ENCODE measurements at regions of chr10 and their contacts with region 1.

Region 1: DNA sequence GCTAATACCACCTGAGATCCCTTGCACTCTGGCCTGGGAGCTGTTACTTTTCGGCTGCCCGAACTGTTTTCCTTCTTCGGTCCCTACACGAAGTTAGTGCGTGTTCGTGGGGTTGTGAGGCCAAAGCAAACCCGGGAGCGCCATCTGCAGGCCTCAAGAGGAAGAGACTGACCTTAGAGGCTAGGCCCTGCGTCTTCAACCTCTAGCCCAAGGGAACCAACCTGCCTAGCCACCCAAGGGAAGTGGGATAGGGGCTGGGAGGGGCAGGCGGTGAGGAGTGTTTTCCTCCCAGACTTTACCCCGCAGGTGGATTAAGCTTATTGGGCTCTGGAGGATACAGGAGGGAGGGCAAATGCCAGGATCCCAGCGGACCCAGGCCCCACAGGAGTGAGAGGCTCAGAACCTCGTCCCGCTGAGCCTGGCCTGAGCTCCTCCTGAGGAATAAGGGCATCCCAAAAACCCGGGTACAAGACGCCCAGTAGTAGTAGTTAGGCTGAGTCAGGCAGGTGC is 1.7 kb upstream of the PAX2 start:
- DNase-seq: peak; percentile 54
- H3K27ac ChIP-seq: no peak overlapping the region
- CTCF ChIP-seq: peak; percentile 59

Region 2: GRCh38 chr10:100562008-100562711 is 181.5 kb before region 1 on chr10:
- CTCF ChIA-PET with region 1: interaction called, 77 read pairs
- POLR2A ChIA-PET with region 1: no interaction called
- DNase-seq: peak; percentile 92
- H3K27ac ChIP-seq: no peak overlapping the region
- CTCF ChIP-seq: peak; percentile 95

Region 3: GRCh38 chr10:100642295-100642994 is 101.2 kb before region 1 on chr10:
- CTCF ChIA-PET with region 1: no interaction called
- POLR2A ChIA-PET with region 1: no interaction called
- DNase-seq: no peak
- H3K27ac ChIP-seq: no peak overlapping the region
- CTCF ChIP-seq: no peak

Region 4: DNA sequence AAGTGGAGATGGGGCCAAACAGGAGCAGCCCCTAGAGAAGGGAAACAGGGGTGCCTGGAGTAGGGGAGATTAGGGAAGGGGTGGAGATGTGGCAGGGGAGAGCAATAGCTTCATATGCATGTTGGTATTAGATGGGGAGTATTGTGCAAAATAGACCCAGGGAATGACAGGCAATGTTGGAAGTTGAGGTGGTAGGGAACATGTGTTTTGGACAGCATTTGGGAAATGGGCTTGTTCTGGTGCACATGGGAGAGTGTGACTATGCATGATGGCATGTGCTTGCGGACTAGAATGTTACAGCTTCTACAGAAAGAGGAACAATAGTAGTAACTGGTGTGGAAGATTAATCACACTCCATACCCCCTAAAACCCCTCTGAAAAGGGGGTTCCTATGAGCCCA is 12.1 kb after region 1 on chr10:
- CTCF ChIA-PET with region 1: interaction called, 17 read pairs
- POLR2A ChIA-PET with region 1: no interaction called
- DNase-seq: no peak
- H3K27ac ChIP-seq: no peak overlapping the region
- CTCF ChIP-seq: no peak

Region 5: DNA sequence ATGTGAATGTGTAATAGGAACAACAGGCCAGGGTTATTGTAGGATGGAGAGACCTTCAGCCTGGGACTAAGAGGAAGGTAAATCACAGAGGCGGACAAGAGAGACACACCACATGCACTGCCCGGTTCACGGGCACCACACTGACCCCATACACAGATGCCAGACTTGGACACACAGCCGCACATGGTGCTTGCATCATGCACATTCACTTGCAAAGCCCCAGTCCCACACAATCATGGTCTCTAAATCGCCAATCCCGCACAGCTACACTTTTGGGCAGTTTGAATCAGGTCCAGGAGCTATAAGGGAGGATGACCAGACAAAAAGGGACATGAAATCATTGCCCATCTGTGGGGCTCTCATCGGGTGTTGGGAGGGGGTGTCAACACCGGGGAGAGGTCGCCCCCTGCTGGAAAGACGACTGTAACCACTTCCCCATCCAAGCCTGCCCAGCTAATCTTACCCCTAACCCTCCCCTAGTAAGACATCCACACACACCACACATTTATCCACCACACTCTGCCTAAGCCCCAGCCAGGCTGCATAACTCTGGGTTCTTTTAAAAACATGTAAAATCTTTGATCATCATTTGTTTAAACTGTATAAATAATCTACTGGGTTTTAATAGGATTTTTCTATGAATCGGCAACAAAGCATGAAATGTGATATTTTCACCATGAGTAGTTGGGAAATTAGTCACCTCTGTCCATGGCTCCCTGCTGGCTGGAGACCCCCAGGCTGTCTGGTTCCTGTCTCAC is 128.5 kb after region 1 on chr10:
- CTCF ChIA-PET with region 1: interaction called, 11 read pairs
- POLR2A ChIA-PET with region 1: no interaction called
- DNase-seq: peak; percentile 62
- H3K27ac ChIP-seq: no peak overlapping the region
- CTCF ChIP-seq: no peak; the same call in 1 of the 2 replicates

Region 6: GRCh38 chr10:100986952-100987750 is 243.5 kb after region 1 on chr10 and contains the starts of genes MRPL43 and TWNK:
- CTCF ChIA-PET with region 1: no interaction called
- POLR2A ChIA-PET with region 1: no interaction called
- DNase-seq: peak; percentile 91
- H3K27ac ChIP-seq: peak within 1 kb of the TSS; percentile 88
- CTCF ChIP-seq: no peak

Measured in RWPE1 (cell line).